ENCODE measurements at regions of chr20 and their contacts with region 1.

Region 1: GRCh38 chr20:34558320-34559218 is at the start of gene MAP1LC3A:
- DNase-seq: peak; percentile 71 to 98 (median 92)
- ATAC-seq: peak; percentile 81
- H3K4me3 ChIP-seq: peak within 1 kb of the TSS; percentile 82
- H3K4me3 Mint-ChIP-seq: peak within 1 kb of the TSS; percentile 84
- H3K27ac ChIP-seq: peak within 1 kb of the TSS; percentile 87 to 94
- H3K27ac Mint-ChIP-seq: peak within 1 kb of the TSS; percentile 90
- H3K4me1 ChIP-seq: peaks cover 11% of the 10 kb centered on the region
- H3K4me1 Mint-ChIP-seq: peaks cover 14% of the 10 kb centered on the region
- H3K27me3 ChIP-seq: no peaks in the 10 kb centered on the region
- H3K27me3 Mint-ChIP-seq: no peaks in the 10 kb centered on the region
- CTCF ChIP-seq: no peak
- total RNA-seq, gene MAP1LC3A: 17.5 to 17.7 TPM

Region 2: GRCh38 chr20:34516247-34517113 is 42.1 kb before region 1 on chr20 and contains the start of gene DYNLRB1:
- CTCF ChIA-PET with region 1: no interaction called
- POLR2A ChIA-PET with region 1: interaction called, 17 read pairs
- intact Hi-C with region 1: no loop called
- DNase-seq: peak; percentile 88 to 96 (median 94)
- ATAC-seq: peak; percentile 74
- H3K4me3 ChIP-seq: peak within 1 kb of the TSS; percentile 82
- H3K4me3 Mint-ChIP-seq: peak within 1 kb of the TSS; percentile 99
- H3K27ac ChIP-seq: peak within 1 kb of the TSS; percentile 60 to 80
- H3K27ac Mint-ChIP-seq: peak within 1 kb of the TSS; percentile 94
- H3K4me1 ChIP-seq: peaks cover 30% of the 10 kb centered on the region
- H3K4me1 Mint-ChIP-seq: peaks cover 70% of the 10 kb centered on the region
- H3K27me3 ChIP-seq: no peaks in the 10 kb centered on the region
- H3K27me3 Mint-ChIP-seq: no peaks in the 10 kb centered on the region
- CTCF ChIP-seq: no peak
- total RNA-seq, gene DYNLRB1: 38.3 to 40.3 TPM

Region 3: DNA sequence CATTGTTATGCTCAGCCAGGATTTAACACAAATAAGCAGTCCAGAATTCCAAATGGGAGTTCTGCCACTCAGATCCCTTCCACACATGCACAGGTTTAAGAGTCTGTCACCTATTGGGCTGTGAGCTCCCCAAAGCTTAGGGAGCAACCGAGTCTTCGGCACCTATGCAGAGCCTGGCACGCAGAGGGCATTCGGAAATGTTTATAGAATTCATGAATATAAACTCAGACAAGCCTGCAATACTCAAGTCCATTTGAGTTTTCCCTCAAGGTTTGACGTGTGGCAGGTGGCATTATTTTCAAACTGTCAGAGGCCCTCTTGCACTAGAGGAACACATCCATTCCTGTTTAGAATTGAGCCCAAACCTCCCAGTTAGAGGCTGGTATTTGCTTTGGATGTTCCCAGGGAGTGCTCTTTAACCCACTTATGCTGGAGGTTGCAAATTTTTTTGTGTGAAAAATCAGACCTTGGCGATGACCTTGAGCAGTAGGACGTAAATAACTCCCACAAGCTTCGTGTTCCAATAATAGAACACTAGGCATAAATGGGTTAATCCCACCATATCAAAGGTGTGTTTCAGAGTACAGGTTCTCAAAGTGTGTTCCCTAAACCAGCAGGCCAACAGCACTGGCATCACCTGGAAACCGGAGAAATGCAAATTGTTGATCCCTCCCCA is 28.1 kb after region 1 on chr20:
- CTCF ChIA-PET with region 1: no interaction called
- POLR2A ChIA-PET with region 1: no interaction called
- intact Hi-C with region 1: no loop called
- DNase-seq: no peak
- ATAC-seq: no peak
- H3K4me3 ChIP-seq: no peak overlapping the region
- H3K4me3 Mint-ChIP-seq: no peak overlapping the region
- H3K27ac ChIP-seq: no peak overlapping the region
- H3K27ac Mint-ChIP-seq: no peak overlapping the region
- H3K4me1 ChIP-seq: peaks cover 3% of the 10 kb centered on the region
- H3K4me1 Mint-ChIP-seq: no peaks in the 10 kb centered on the region
- H3K27me3 ChIP-seq: no peaks in the 10 kb centered on the region
- H3K27me3 Mint-ChIP-seq: no peaks in the 10 kb centered on the region
- CTCF ChIP-seq: no peak